ENCODE measurements at regions of chr9 and their contacts with region 1.

Region 1: DNA sequence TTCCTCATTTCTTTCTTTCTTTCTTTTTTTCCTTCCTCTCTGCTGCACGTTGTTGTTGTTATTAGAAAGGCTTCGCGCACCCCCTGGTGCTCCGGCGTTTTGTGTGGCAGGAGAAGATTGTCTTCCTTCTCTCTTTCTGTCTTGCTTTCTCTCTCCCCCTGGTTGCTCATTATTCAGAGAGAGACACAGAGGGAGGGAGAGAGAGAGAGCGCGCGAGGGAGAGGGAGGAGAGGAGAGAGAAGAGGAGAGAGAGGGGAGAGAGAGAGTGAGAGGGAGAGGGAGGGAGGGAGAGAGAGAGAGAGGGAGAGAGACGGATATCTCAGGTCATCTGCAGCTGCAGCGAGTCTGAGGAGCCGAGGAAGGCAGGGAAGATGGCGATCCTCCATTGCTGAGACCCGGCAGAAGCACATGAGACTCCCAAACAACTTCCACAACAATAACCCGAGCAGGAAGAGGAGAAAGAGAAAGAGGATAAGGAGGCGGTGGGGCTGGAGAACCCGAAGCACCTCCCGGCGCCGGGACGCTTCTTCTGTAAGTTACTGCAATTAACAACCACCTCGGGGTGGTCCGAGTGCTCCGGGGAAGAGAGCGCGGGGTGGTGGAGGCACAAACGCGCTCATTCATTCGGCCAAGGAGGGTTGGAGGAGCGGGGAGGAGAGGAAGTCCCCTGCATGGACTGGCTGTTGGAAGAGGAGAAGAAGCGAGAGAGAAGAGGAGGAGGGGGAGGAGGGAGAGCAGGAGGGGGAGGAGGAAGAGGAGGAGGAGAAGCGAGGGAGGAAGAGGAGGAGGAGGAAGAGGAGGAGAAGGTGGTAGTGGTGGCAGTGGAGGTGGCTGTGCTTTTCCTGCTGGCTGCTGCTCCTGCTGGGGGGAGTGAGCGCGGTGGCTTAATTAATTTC is at the start of gene ZNF462:
- DNase-seq: peak; percentile 45 to 78 (median 64)
- ATAC-seq: peak; percentile 47 to 51
- H3K4me3 ChIP-seq: peak within 1 kb of the TSS; percentile 95
- H3K27ac ChIP-seq: peak within 1 kb of the TSS; percentile 68
- H3K4me1 ChIP-seq: peaks cover 2% of the 10 kb centered on the region
- H3K27me3 ChIP-seq: no peaks in the 10 kb centered on the region
- total RNA-seq, gene ZNF462: 29.0 to 34.6 (median 31.8) TPM

Region 2: DNA sequence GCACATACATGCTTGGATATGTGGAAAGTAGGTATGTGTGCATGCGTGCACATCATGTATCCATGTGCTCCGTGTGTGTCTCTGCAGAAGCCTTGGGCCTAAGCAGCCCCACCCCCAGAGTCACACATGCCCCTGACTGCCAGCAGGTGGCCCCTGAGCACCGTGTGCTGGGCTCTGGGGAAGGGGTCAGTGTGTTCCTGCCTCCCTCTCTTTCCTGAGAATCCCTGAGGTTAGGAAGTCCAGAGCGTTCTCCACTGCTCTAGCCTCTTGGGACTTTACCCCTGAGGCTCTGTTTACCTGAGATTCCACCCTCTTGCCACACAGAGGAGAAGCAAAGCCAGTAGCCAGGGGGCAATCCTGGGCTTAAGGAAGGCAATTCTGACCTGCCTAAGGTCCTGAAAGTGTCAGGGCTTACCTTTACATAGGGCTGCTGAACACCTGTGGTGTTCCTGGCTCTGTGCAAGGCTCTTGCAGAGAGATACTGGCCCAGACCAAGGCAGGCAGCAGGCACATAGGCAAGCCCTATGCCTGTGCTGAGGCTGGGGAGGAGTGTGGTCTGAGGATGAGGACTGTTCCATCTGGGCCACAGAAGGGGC is 961.5 kb before region 1 on chr9:
- intact Hi-C with region 1: loop called in 1 of 4 experiments (anchors 5 kb)
- DNase-seq: peak; percentile 35 to 67 (median 63)
- ATAC-seq: peak; percentile 85 to 90
- H3K4me3 ChIP-seq: no peak overlapping the region
- H3K27ac ChIP-seq: no peak overlapping the region
- H3K4me1 ChIP-seq: no peaks in the 10 kb centered on the region
- H3K27me3 ChIP-seq: no peaks in the 10 kb centered on the region

Region 3: GRCh38 chr9:106535439-106535838 is 327.6 kb before region 1 on chr9:
- intact Hi-C with region 1: no loop called
- DNase-seq: no peak
- ATAC-seq: peak; percentile 33 to 72
- H3K4me3 ChIP-seq: no peak overlapping the region
- H3K27ac ChIP-seq: no peak overlapping the region
- H3K4me1 ChIP-seq: peaks cover 6% of the 10 kb centered on the region
- H3K27me3 ChIP-seq: no peaks in the 10 kb centered on the region

Region 4: DNA sequence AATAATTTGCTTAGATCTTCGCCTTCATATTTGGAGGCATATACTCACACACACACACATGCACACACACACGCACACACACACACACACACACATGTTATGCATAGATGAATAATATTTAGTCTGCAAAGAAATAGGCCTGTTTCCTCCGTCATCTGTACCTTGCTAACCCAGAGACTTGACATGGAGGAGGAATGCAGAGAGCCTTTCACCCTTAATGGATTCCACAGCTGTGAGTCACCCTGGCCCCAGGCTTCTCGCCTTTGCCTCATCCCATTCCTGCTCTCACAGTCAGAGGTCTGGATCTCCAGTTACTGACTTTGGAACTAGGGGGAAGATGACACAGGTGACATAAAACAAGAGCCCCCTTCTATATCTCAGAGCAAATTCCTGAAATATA is 29.6 kb after region 1 on chr9:
- intact Hi-C with region 1: no loop called
- DNase-seq: no peak
- ATAC-seq: peak; percentile 64 to 77
- H3K4me3 ChIP-seq: no peak overlapping the region
- H3K27ac ChIP-seq: peak overlapping the region; percentile 13
- H3K4me1 ChIP-seq: peaks cover 2% of the 10 kb centered on the region
- H3K27me3 ChIP-seq: no peaks in the 10 kb centered on the region

Region 5: GRCh38 chr9:106921341-106921899 is 58.3 kb after region 1 on chr9:
- intact Hi-C with region 1: loop called (anchors 5 to 10 kb)
- DNase-seq: peak; percentile 41 to 65 (median 41)
- ATAC-seq: peak; percentile 94 to 95
- H3K4me3 ChIP-seq: peak overlapping the region; percentile 34
- H3K27ac ChIP-seq: peak overlapping the region; percentile 80
- H3K4me1 ChIP-seq: peaks cover 4% of the 10 kb centered on the region
- H3K27me3 ChIP-seq: no peaks in the 10 kb centered on the region

Region 6: DNA sequence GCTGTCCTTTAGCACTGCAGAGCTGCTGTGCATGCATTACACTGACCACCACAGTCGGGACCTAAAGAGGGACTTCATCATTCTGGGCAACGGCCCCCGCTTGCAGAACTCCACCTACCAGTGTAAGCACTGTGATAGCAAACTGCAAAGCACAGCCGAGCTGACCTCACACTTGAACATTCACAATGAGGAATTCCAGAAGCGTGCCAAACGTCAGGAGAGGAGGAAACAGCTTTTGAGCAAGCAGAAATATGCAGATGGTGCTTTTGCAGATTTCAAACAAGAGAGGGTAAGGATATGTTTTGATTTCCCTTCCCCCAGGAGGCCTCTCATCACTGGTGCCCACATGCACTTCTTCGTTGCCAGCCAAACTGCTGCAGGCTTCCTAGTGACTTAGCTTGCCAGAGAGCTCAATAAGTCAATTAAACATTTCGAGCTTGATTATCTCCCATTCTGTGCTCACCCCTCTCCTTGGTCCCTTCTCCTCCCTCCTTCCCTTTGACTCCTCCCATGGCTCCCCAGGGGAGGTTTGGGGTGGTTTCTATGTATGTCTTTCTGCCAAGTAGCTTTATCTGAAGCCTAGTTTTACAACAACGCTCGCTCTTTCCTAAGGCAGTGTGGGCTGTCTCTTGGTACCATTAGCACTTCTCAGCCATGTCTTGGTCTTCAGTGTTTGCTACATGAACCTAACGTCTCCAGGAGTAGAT is 66.6 kb after region 1 on chr9:
- intact Hi-C with region 1: loop called in 3 of 4 experiments (anchors 5 to 10 kb)
- DNase-seq: peak; percentile 52 to 81 (median 72)
- ATAC-seq: peak; percentile 80 to 87
- H3K4me3 ChIP-seq: no peak overlapping the region
- H3K27ac ChIP-seq: peak overlapping the region; percentile 91
- H3K4me1 ChIP-seq: peaks cover 9% of the 10 kb centered on the region
- H3K27me3 ChIP-seq: no peaks in the 10 kb centered on the region

Region 7: DNA sequence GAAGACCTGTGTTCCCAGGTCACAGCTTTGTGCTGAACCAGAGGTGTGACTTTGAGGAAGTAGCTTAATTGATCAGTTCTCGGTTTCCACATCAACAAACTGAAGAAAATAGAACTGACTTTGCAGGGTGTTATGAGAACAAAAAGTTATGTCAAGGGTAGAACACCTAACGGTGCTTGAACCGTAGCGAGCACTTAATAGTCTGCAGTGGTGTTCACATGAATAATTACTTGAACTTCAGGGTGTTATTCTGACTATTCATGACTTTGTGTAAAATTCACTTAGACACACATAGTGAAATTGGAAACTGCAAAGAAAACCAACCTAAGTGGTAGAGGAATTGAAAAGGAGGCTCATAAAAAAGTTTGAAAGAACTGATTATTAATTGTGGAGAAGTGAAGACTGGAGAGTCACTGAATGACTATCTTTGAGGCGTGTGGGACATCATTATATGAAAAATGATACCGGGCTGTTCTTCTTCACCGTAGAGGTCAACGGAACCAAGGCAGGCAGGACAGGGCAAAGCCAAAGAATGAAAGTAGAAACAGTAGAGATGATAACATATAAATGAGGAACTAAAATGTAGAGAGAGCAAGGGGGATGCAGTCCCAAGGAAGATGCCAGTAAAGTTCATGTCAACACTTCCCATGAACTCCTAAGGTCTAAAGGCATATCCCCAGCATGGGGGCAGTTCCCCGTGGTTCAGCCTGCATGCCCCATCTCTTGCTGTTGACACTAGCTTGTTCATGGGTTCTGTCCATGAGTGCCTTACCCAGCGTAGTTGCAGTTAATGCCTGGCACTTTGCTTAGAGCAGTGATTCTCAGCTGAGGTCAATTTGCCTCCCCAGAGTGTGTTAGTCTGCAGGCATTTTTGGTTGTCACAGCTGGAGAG is 118.6 kb after region 1 on chr9:
- intact Hi-C with region 1: loop called in 1 of 4 experiments (anchors 10 kb)
- DNase-seq: no peak
- ATAC-seq: no peak
- H3K4me3 ChIP-seq: no peak overlapping the region
- H3K27ac ChIP-seq: no peak overlapping the region
- H3K4me1 ChIP-seq: no peaks in the 10 kb centered on the region
- H3K27me3 ChIP-seq: no peaks in the 10 kb centered on the region

Region 8: GRCh38 chr9:107172160-107172978 is 309.3 kb after region 1 on chr9:
- intact Hi-C with region 1: loop called in 1 of 4 experiments (anchors 10 kb)
- DNase-seq: peak; percentile 72 to 84 (median 82)
- ATAC-seq: peak; percentile 73 to 75
- H3K4me3 ChIP-seq: no peak overlapping the region
- H3K27ac ChIP-seq: no peak overlapping the region
- H3K4me1 ChIP-seq: peaks cover 14% of the 10 kb centered on the region
- H3K27me3 ChIP-seq: no peaks in the 10 kb centered on the region